ENCODE measurements at regions of chr1 and their contacts with region 1.

Region 1: GRCh38 chr1:193183019-193183627 is 3.3 kb downstream of the B3GALT2 start:
- DNase-seq: peak in 1 of 2 donors; percentile 17
- ATAC-seq: peak in 4 of 8 donors; percentile 55 to 63 (median 56)
- H3K4me3 ChIP-seq: peak overlapping the region in 9 of 10 donors; percentile 30 to 55 (median 49)
- H3K27ac ChIP-seq: peak overlapping the region in 6 of 10 donors; percentile 1 to 81 (median 42)
- H3K4me1 ChIP-seq: peaks cover 0 to 78% (median 31%) of the 10 kb centered on the region in 9 donors
- H3K27me3 ChIP-seq: no peaks in the 10 kb centered on the region
- CTCF ChIP-seq: peak; percentile 73 to 92 (median 83)

Region 2: DNA sequence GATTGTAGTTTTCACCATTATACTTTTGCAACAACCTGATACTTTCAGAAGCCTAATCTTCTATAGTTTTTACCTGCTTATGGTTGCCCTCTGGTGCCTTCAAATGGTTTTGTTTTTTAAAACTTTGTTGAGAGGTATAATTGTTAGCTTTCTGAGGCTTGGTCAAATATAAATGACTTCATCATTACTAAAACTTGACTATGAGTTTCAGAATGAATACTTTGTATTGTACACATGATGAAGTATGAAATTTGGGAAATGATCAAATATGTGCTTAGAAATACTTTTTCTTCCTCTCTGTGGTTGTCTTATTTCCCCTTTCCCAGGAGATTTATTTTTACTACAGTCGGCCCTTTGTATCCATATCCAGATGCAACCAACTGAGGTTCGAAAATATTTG is 155.1 kb after region 1 on chr1:
- intact Hi-C with region 1: loop called in 3 of 10 experiments (anchors 5 to 10 kb)
- DNase-seq: no peak
- ATAC-seq: peak in 2 of 8 donors; percentile 19 to 46
- H3K4me3 ChIP-seq: no peak overlapping the region
- H3K27ac ChIP-seq: no peak overlapping the region
- H3K4me1 ChIP-seq: no peaks in the 10 kb centered on the region
- H3K27me3 ChIP-seq: no peaks in the 10 kb centered on the region
- CTCF ChIP-seq: peak in 4 of 9 donors; percentile 6 to 33 (median 20)

Region 3: GRCh38 chr1:193392686-193393085 is 209.6 kb after region 1 on chr1:
- intact Hi-C with region 1: no loop called
- DNase-seq: no peak
- ATAC-seq: no peak
- H3K4me3 ChIP-seq: no peak overlapping the region
- H3K27ac ChIP-seq: no peak overlapping the region
- H3K4me1 ChIP-seq: peaks cover 0 to 10% (median 0%) of the 10 kb centered on the region in 9 donors
- H3K27me3 ChIP-seq: no peaks in the 10 kb centered on the region
- CTCF ChIP-seq: no peak

Region 4: GRCh38 chr1:193951984-193952383 is 768.9 kb after region 1 on chr1:
- intact Hi-C with region 1: loop called in 2 of 10 experiments (anchors 10 kb)
- DNase-seq: no peak
- ATAC-seq: peak in 4 of 8 donors; percentile 29 to 57 (median 36)
- H3K4me3 ChIP-seq: no peak overlapping the region
- H3K27ac ChIP-seq: peak overlapping the region in 8 of 10 donors; percentile 41 to 73 (median 52)
- H3K4me1 ChIP-seq: peaks cover 0 to 13% (median 0%) of the 10 kb centered on the region in 9 donors
- H3K27me3 ChIP-seq: no peaks in the 10 kb centered on the region
- CTCF ChIP-seq: no peak

Region 5: DNA sequence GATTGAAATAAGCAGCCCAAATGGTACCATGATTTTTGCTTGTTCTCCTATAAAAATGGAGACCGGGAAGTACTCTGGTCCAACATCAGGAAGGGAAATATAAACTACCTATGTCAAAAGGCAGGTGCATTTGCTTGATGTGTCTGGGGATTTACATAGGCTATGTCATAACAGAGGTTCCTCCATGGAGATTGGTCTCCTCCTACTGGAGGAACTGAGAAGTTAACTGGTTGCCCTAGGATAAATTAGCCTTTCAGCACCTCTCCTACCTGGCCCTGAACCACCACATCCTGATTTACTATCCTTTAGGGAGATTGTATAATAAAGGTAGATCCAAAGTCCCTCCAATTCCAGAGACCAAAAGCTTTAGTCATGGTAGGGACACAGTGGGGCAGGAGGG is 1112.6 kb after region 1 on chr1:
- intact Hi-C with region 1: loop called in 4 of 10 experiments (anchors 5 to 10 kb)
- DNase-seq: peak in 1 of 2 donors; percentile 7
- ATAC-seq: peak in 6 of 8 donors; percentile 44 to 81 (median 70)
- H3K4me3 ChIP-seq: no peak overlapping the region
- H3K27ac ChIP-seq: no peak overlapping the region
- H3K4me1 ChIP-seq: no peaks in the 10 kb centered on the region
- H3K27me3 ChIP-seq: no peaks in the 10 kb centered on the region
- CTCF ChIP-seq: peak; percentile 24 to 67 (median 54)

Measured in heart right ventricle (tissue), 16 donors.